Naive thymus-derived CD4-positive, alpha-beta T cell (primary cell): ENCODE measurements at regions of chr19 and their contacts with region 1.

Region 1: DNA sequence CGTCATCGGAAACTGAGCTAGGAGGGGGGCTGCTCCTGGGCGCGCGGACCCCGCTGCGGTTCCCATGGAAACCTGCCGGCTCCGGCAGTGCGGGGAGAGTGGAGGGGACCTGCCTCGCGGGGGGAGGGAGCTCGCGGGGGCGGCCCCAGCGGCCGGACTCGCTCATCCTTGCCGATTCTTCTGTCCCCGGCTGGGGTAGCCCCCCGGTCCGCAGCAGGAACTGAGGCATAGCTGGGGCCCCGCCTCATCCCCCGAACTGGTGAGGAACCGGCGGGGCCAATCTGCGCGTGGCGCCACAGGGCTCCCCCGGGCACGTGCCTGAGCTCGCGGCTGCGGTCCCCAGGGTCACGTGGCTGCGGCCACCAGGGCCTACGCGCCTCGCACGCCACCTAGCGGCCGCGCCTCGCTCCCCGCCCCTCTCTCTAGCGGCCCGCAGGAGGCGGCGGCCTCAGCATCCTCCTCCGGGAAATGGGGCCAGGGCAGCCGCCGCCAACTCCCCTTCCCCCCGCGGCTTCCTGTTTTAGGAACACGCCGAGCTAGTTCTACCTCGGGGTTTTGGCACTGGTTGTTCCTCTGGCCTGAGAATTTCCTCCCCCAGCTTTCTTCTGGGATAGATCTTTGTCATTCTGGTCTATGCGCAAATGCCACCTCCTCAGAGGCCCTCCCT is 1.7 kb upstream of the ELAVL3 start:
- DNase-seq: peak; percentile 63 to 92 (median 76)
- ATAC-seq: peak; percentile 92
- H3K4me3 ChIP-seq: peak overlapping the region; percentile 19
- H3K4me3 Mint-ChIP-seq: peak overlapping the region in 9 of 10 donors; percentile 52 to 83 (median 71)
- H3K27ac ChIP-seq: no peak overlapping the region
- H3K27ac Mint-ChIP-seq: peak overlapping the region in 2 of 9 donors; percentile 21 to 85
- H3K4me1 ChIP-seq: peaks cover 15 to 20% of the 10 kb centered on the region in 2 donors
- H3K4me1 Mint-ChIP-seq: peaks cover 12 to 24% (median 21%) of the 10 kb centered on the region in 7 donors
- H3K27me3 ChIP-seq: peaks cover 8 to 17% of the 10 kb centered on the region in 2 donors
- H3K27me3 Mint-ChIP-seq: peaks cover 25 to 37% (median 33%) of the 10 kb centered on the region in 5 donors

Region 2: GRCh38 chr19:11137542-11138384 is 344.8 kb before region 1 on chr19:
- CTCF ChIA-PET with region 1: no interaction called
- POLR2A ChIA-PET with region 1: no interaction called
- intact Hi-C with region 1: loop called in 1 of 2 experiments (anchors 1 kb)
- DNase-seq: peak; percentile 27 to 64 (median 56)
- ATAC-seq: peak; percentile 81
- H3K4me3 ChIP-seq: peak overlapping the region; percentile 52
- H3K4me3 Mint-ChIP-seq: peak overlapping the region; percentile 76 to 90 (median 86)
- H3K27ac ChIP-seq: no peak overlapping the region
- H3K27ac Mint-ChIP-seq: peak overlapping the region in 8 of 9 donors; percentile 37 to 81 (median 66)
- H3K4me1 ChIP-seq: peaks cover 4 to 12% of the 10 kb centered on the region in 2 donors
- H3K4me1 Mint-ChIP-seq: peaks cover 7 to 23% (median 11%) of the 10 kb centered on the region in 7 donors
- H3K27me3 ChIP-seq: no peaks in the 10 kb centered on the region
- H3K27me3 Mint-ChIP-seq: no peaks in the 10 kb centered on the region

Region 3: GRCh38 chr19:11155373-11156120 is 327.0 kb before region 1 on chr19 and contains the start of gene SPC24:
- CTCF ChIA-PET with region 1: no interaction called
- POLR2A ChIA-PET with region 1: no interaction called
- intact Hi-C with region 1: loop called in 1 of 2 experiments (anchors 5 kb)
- DNase-seq: peak; percentile 70 to 93 (median 90)
- ATAC-seq: peak; percentile 98
- H3K4me3 ChIP-seq: peak within 1 kb of the TSS; percentile 71
- H3K4me3 Mint-ChIP-seq: peak within 1 kb of the TSS; percentile 79 to 94 (median 89)
- H3K27ac ChIP-seq: peak within 1 kb of the TSS; percentile 16
- H3K27ac Mint-ChIP-seq: peak within 1 kb of the TSS; percentile 54 to 92 (median 83)
- H3K4me1 ChIP-seq: peaks cover 6 to 15% of the 10 kb centered on the region in 2 donors
- H3K4me1 Mint-ChIP-seq: peaks cover 7 to 30% (median 15%) of the 10 kb centered on the region in 7 donors
- H3K27me3 ChIP-seq: no peaks in the 10 kb centered on the region
- H3K27me3 Mint-ChIP-seq: no peaks in the 10 kb centered on the region
- total RNA-seq, gene SPC24: 0.56 to 45.4 (median 1.9) TPM

Region 4: GRCh38 chr19:11242864-11243797 is 239.4 kb before region 1 on chr19:
- CTCF ChIA-PET with region 1: interaction called, 4 read pairs
- POLR2A ChIA-PET with region 1: no interaction called
- intact Hi-C with region 1: loop called in 1 of 2 experiments (anchors 1 kb)
- DNase-seq: peak; percentile 47 to 83 (median 71)
- ATAC-seq: peak; percentile 100
- H3K4me3 ChIP-seq: no peak overlapping the region
- H3K4me3 Mint-ChIP-seq: peak overlapping the region in 8 of 10 donors; percentile 23 to 74 (median 35)
- H3K27ac ChIP-seq: no peak overlapping the region
- H3K27ac Mint-ChIP-seq: no peak overlapping the region
- H3K4me1 ChIP-seq: no peaks in the 10 kb centered on the region
- H3K4me1 Mint-ChIP-seq: peaks cover 4 to 7% (median 5%) of the 10 kb centered on the region in 7 donors
- H3K27me3 ChIP-seq: no peaks in the 10 kb centered on the region
- H3K27me3 Mint-ChIP-seq: peaks cover 0 to 29% (median 6%) of the 10 kb centered on the region in 5 donors

Region 5: GRCh38 chr19:11293433-11294389 is 188.8 kb before region 1 on chr19:
- CTCF ChIA-PET with region 1: interaction called, 5 read pairs
- POLR2A ChIA-PET with region 1: no interaction called
- intact Hi-C with region 1: loop called in 1 of 2 experiments (anchors 5 kb)
- DNase-seq: peak; percentile 55 to 88 (median 75)
- ATAC-seq: peak; percentile 98
- H3K4me3 ChIP-seq: no peak overlapping the region
- H3K4me3 Mint-ChIP-seq: peak overlapping the region in 7 of 10 donors; percentile 13 to 69 (median 60)
- H3K27ac ChIP-seq: no peak overlapping the region
- H3K27ac Mint-ChIP-seq: peak overlapping the region in 2 of 9 donors; percentile 31 to 80
- H3K4me1 ChIP-seq: peaks cover 0 to 4% of the 10 kb centered on the region in 2 donors
- H3K4me1 Mint-ChIP-seq: peaks cover 8 to 11% (median 9%) of the 10 kb centered on the region in 7 donors
- H3K27me3 ChIP-seq: no peaks in the 10 kb centered on the region
- H3K27me3 Mint-ChIP-seq: peaks cover 5 to 69% (median 15%) of the 10 kb centered on the region in 5 donors

Region 6: DNA sequence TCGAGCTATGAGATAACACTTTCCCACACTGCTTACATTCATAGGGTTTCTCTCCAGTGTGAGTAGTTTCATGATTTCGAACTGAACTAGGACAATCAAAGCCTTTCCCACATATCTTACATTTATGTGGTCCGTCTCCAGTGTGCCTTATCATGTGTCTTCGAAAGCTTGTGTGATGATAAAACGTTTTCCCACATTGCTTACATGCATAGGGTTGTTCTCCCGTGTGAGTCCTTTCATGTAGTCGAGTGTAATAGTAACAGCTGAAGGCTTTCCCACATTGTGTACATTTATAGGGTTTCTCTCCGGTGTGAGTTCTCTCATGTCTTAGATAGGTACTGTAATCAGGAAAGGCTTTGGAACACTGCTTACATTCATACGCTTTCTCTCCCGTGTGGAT is 239.9 kb after region 1 on chr19:
- CTCF ChIA-PET with region 1: no interaction called
- POLR2A ChIA-PET with region 1: no interaction called
- intact Hi-C with region 1: no loop called
- DNase-seq: no peak
- ATAC-seq: no peak
- H3K4me3 ChIP-seq: no peak overlapping the region
- H3K4me3 Mint-ChIP-seq: no peak overlapping the region
- H3K27ac ChIP-seq: no peak overlapping the region
- H3K27ac Mint-ChIP-seq: no peak overlapping the region
- H3K4me1 ChIP-seq: no peaks in the 10 kb centered on the region
- H3K4me1 Mint-ChIP-seq: no peaks in the 10 kb centered on the region
- H3K27me3 ChIP-seq: no peaks in the 10 kb centered on the region
- H3K27me3 Mint-ChIP-seq: no peaks in the 10 kb centered on the region